AG04450 (cell line): ENCODE measurements at regions of chr2 and their contacts with region 1.

Region 1: GRCh38 chr2:152025678-152026287 is 73.1 kb downstream of the CACNB4 start:
- DNase-seq: no peak
- H3K4me3 ChIP-seq: peak overlapping the region; percentile 46
- H3K27ac ChIP-seq: no peak overlapping the region
- H3K27me3 ChIP-seq: peaks cover 6% of the 10 kb centered on the region
- CTCF ChIP-seq: peak; percentile 96

Region 2: DNA sequence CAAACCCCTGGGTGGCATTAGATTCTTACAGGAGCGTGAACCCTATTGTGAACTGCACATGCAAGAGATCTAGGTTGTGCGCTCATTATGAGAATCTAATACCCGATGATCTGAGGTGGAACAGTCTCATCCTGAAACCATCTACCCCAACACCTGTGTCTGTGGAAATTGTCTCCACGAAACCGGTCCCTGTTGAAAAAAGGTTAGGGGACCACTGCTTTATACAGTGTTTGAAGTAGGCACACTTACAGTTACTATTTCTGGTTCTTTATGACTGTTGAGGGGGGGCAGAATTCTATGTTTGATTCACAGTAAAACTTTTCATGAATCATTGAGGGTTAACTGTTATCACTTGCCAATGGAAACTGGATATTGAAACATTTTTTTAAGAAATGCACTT is 544.0 kb before region 1 on chr2:
- CTCF ChIA-PET with region 1: interaction called, 11 read pairs
- POLR2A ChIA-PET with region 1: no interaction called
- DNase-seq: no peak
- H3K4me3 ChIP-seq: no peak overlapping the region
- H3K27ac ChIP-seq: no peak overlapping the region
- H3K27me3 ChIP-seq: no peaks in the 10 kb centered on the region
- CTCF ChIP-seq: no peak

Region 3: DNA sequence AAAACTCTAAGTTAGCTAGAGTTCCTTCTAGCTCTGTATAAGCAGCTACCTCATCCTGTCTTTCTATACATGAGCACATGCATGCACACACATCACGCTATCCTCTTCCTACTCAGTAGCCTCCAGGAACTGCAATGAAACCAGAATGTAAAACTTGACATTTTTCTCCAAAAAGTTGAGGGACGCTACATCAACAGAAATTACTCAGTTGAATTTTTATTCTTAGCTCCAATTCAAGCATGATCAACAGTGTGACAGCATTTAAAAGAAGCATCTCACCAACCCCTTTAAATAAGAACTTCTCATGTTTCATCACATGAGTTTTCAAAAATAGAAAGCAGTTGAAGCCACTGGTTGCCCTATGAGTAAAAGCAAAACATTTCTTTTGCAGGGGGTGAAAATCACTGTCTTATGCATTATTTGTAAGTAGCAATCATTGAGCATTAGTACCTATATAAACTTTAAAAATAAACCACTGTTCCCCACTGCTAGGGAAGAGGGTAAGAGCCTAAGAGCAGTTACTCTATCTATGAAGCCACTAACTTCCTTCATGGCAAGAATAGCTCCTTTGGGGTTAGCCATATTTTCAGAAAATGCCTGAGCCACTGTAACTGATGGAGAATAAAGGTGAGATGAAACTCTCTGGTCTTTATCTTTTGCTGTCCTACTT is 119.7 kb before region 1 on chr2:
- CTCF ChIA-PET with region 1: no interaction called
- POLR2A ChIA-PET with region 1: no interaction called
- DNase-seq: no peak
- H3K4me3 ChIP-seq: no peak overlapping the region
- H3K27ac ChIP-seq: no peak overlapping the region
- H3K27me3 ChIP-seq: no peaks in the 10 kb centered on the region
- CTCF ChIP-seq: no peak

Region 4: DNA sequence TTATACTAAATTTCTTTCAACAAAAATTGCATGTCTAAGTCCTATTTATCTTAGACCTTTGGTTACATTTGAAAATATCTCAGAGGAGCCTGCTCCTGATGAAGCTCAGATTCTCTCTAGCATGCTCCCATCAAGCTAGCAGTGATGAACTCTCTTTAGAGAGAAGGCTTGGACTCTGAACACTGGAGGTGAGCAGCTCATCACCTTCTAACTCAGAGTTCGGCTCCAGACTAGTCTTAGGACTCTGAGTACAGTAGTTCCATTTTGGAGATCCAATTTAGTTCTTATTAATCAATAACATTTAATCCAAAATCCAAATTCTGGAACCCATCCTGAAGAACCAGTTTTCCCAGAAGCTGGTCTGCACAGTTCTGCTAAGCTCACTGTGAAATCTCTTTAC is 34.8 kb before region 1 on chr2:
- CTCF ChIA-PET with region 1: interaction called, 14 read pairs
- POLR2A ChIA-PET with region 1: no interaction called
- DNase-seq: no peak
- H3K4me3 ChIP-seq: no peak overlapping the region
- H3K27ac ChIP-seq: no peak overlapping the region
- H3K27me3 ChIP-seq: peaks cover 4% of the 10 kb centered on the region
- CTCF ChIP-seq: no peak

Region 5: DNA sequence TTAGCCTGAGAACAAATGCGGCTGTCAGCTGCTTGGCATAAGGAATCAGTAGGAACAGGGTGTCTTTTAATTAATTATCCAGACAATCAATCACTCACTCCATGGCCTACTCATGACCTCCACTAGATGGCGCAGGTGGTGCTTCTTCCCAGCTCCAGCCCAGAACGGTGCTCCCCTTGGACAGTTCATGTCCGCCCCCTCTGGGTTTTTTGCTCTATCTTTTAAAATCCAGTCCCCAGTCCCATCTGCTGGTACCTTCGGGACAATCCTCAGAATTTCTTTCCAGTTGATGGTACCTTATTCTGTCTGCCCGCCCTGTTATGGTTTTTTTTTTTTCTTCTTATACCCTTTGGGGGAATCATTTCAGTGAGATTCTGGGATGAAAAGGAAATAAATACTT is 26.7 kb before region 1 on chr2:
- CTCF ChIA-PET with region 1: interaction called, 28 read pairs
- POLR2A ChIA-PET with region 1: no interaction called
- DNase-seq: no peak
- H3K4me3 ChIP-seq: no peak overlapping the region
- H3K27ac ChIP-seq: no peak overlapping the region
- H3K27me3 ChIP-seq: peaks cover 6% of the 10 kb centered on the region
- CTCF ChIP-seq: peak; percentile 75

Region 6: DNA sequence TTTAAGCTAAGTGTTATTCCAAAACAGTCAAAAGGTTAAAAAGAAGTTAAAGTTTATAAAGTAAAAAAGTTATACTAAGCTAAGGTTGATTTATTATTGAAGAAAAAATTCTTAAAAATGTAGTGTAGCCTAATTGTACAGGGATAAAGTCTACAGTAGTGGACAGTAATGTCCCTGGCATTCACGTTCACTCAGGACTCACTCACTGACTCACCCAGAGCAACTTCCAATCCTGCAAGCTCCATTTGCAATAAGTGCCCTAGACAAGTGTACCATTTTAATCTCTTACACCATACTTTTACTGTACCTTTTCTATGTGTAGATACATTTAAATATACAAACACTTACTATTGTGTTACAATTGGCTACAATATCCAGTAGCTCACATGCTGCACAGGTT is 13.1 kb before region 1 on chr2:
- CTCF ChIA-PET with region 1: interaction called, 52 read pairs
- POLR2A ChIA-PET with region 1: no interaction called
- DNase-seq: no peak
- H3K4me3 ChIP-seq: no peak overlapping the region
- H3K27ac ChIP-seq: no peak overlapping the region
- H3K27me3 ChIP-seq: peaks cover 3% of the 10 kb centered on the region
- CTCF ChIP-seq: no peak

Region 7: DNA sequence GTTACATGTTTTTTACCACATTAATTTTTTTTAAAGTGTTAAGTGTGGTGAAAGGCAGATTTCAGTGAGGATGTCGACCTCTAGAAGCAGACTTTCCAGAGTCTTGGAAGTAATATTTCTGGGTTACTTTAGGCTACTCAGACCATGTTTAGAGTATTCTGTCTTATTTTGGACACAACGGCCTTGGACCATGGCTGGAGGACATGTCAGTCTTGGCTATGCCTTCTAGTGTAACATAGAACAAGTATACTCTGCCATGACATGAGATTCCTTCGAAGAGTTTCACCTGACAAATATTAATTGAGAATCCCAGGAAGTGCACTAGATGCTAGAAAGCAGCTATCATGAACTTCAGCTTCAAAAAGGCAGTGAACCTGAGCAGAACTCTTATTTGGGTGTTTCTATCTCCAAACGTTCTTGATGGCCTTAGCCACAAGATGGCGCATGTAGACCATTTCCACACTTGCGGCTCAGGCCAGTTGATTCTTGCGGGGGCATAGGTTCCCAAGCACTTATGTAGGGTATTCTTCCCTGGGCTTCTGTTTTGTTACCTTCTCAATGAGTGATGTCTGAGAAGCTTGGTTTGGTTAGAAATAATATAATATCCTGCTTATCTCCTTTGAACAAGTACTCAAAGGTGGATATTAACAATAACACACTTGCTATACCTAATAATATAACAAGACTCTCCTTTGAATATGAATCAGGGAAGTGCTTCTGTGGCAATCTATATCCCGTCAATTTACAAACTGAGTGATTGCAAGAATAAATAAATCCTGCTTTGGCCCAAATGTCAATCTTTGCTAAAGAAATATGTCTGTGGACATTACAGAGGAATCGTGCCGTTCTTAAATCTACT is 11.1 kb after region 1 on chr2:
- CTCF ChIA-PET with region 1: interaction called, 96 read pairs
- POLR2A ChIA-PET with region 1: no interaction called
- DNase-seq: peak; percentile 45
- H3K4me3 ChIP-seq: no peak overlapping the region
- H3K27ac ChIP-seq: no peak overlapping the region
- H3K27me3 ChIP-seq: peaks cover 18% of the 10 kb centered on the region
- CTCF ChIP-seq: peak; percentile 91

Region 8: GRCh38 chr2:152047819-152048471 is 22.2 kb after region 1 on chr2:
- CTCF ChIA-PET with region 1: interaction called, 96 read pairs
- POLR2A ChIA-PET with region 1: no interaction called
- DNase-seq: no peak
- H3K4me3 ChIP-seq: no peak overlapping the region
- H3K27ac ChIP-seq: no peak overlapping the region
- H3K27me3 ChIP-seq: no peaks in the 10 kb centered on the region
- CTCF ChIP-seq: peak; percentile 35; the same call in 1 of the 2 replicates

Region 9: DNA sequence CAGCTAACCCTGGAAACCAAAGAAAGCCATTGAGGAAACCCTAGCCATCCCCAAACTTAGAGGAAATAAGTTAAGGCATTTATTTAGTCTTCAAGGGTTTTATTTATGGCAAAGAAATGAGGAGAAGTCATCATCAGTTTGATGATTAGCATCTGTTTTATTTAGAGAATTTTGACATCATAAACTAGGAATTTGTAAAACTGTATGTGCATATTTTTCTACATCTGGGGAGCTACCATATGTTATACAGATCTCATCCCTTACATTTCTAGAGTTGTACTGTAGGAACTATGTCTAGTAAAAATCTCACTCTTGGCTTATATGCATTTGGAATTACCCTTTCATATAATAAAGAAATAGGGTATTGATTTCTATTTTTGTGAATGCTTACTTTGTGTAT is 357.9 kb after region 1 on chr2:
- CTCF ChIA-PET with region 1: no interaction called
- POLR2A ChIA-PET with region 1: no interaction called
- DNase-seq: peak; percentile 34
- H3K4me3 ChIP-seq: no peak overlapping the region
- H3K27ac ChIP-seq: no peak overlapping the region
- H3K27me3 ChIP-seq: no peaks in the 10 kb centered on the region
- CTCF ChIP-seq: no peak